ENCODE measurements at regions of chr9 and their contacts with region 1.

Region 1: DNA sequence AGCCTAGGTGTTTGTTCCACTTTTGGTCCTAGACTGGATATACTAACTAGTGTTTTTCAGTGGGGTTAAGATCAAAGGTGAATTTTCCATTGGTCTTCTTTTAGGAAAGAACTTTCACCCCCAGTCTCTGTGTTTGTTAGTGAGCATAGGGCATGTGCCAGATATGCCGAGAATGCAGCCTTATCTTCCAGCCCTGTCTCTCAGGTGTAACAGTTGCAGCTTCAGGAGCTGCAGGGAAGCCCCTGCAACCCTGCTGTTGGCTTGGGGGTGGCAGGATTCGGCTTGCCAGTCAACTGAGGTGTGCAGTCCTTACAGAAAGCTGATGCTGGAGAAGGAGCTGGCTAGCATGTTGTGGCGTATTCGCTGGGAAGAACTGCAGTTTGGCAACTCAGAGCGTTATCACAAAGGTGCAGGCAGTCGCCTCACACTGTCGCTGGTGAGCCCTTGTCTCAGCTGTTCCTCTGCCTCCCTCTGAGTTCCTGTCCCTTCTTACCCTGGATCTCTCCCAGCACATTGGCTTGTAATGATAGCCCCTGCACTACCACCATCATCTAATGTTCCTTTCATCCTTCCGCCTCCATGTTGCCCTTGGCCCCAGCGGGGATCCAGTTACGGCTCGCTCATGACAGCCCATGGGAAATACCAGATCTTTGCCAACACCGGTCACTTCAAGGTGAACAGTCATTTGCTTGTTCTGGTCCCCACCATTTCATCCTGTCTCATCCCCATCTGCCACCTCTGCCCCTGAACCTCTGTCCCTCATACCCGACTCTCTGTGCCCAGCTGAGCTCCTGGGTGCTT is 10.1 kb downstream of the NPR2 start:
- DNase-seq: peak; percentile 55 to 62
- H3K4me3 ChIP-seq: peak overlapping the region; percentile 6; the same call in 1 of the 2 replicates
- H3K4me3 Mint-ChIP-seq: peak overlapping the region; percentile 70
- H3K27ac Mint-ChIP-seq: peak overlapping the region; percentile 85
- H3K4me1 ChIP-seq: peaks cover 46% of the 10 kb centered on the region
- H3K4me1 Mint-ChIP-seq: peaks cover 29% of the 10 kb centered on the region
- H3K27me3 ChIP-seq: no peaks in the 10 kb centered on the region
- H3K27me3 Mint-ChIP-seq: no peaks in the 10 kb centered on the region
- CTCF ChIP-seq: no peak

Region 2: GRCh38 chr9:35603987-35604577 is 197.4 kb before region 1 on chr9:
- CTCF ChIA-PET with region 1: no interaction called
- POLR2A ChIA-PET with region 1: no interaction called
- intact Hi-C with region 1: no loop called
- DNase-seq: peak; percentile 99 to 100
- H3K4me3 ChIP-seq: peak overlapping the region; percentile 92
- H3K4me3 Mint-ChIP-seq: peak overlapping the region; percentile 99
- H3K27ac Mint-ChIP-seq: peak overlapping the region; percentile 99
- H3K4me1 ChIP-seq: peaks cover 16% of the 10 kb centered on the region
- H3K4me1 Mint-ChIP-seq: peaks cover 23% of the 10 kb centered on the region
- H3K27me3 ChIP-seq: no peaks in the 10 kb centered on the region
- H3K27me3 Mint-ChIP-seq: no peaks in the 10 kb centered on the region
- CTCF ChIP-seq: peak; percentile 78 to 83

Region 3: GRCh38 chr9:35732122-35732799 is 69.3 kb before region 1 on chr9 and contains the starts of genes CREB3 and TLN1:
- CTCF ChIA-PET with region 1: no interaction called
- POLR2A ChIA-PET with region 1: no interaction called
- intact Hi-C with region 1: no loop called
- DNase-seq: peak; percentile 98 to 99
- H3K4me3 ChIP-seq: peak within 1 kb of the TSS; percentile 83
- H3K4me3 Mint-ChIP-seq: no peak within 1 kb of the TSS
- H3K27ac Mint-ChIP-seq: no peak within 1 kb of the TSS
- H3K4me1 ChIP-seq: peaks cover 39% of the 10 kb centered on the region
- H3K4me1 Mint-ChIP-seq: no peaks in the 10 kb centered on the region
- H3K27me3 ChIP-seq: no peaks in the 10 kb centered on the region
- H3K27me3 Mint-ChIP-seq: no peaks in the 10 kb centered on the region
- CTCF ChIP-seq: peak in 1 of 2 experiments; percentile 12
- total RNA-seq, gene CREB3: 50.4 and 54.1 TPM in 2 replicates
- total RNA-seq, gene TLN1: 147 and 165 TPM in 2 replicates

Region 4: DNA sequence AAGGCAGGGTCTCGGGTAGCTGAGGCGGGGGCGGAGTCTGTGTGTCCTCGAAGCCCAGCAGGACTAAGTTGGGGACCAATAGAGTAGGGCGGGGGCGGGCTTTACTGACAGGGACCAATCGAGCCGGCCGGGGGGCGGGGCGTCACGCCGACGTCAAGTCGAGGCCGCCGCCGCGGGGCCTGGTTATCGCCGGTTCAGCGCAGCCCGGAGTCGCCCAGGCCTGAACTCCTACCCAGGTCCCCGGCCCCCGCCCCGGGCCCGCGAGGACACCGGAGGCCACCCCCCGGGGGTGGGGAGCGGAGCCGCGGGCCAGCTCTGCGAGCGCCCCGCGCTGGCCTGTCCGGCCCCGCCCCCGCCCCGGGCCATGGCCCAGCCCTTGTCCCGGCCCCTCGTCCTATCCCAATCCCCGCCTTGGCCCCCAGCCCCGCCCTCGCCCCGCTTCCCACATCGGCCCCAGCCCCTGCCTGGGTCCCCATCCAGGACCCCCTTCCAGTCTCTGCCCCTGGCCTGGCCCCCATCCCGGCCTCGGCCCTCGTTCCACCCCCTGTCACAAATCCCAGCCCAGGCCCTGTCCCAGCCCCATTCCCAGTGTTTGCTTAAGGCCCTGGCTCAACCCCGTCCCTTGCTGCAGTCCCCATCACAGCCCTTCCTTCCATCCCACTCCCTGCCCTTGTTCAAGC is 27.7 kb after region 1 on chr9 and contains the start of gene TMEM8B:
- CTCF ChIA-PET with region 1: interaction called, 6 read pairs
- POLR2A ChIA-PET with region 1: no interaction called
- intact Hi-C with region 1: loop called (anchors 1 kb)
- DNase-seq: peak; percentile 94 to 95
- H3K4me3 ChIP-seq: peak within 1 kb of the TSS; percentile 48
- H3K4me3 Mint-ChIP-seq: peak within 1 kb of the TSS; percentile 88
- H3K27ac Mint-ChIP-seq: peak within 1 kb of the TSS; percentile 88
- H3K4me1 ChIP-seq: peaks cover 4% of the 10 kb centered on the region; the same call in 1 of the 2 replicates
- H3K4me1 Mint-ChIP-seq: peaks cover 8% of the 10 kb centered on the region
- H3K27me3 ChIP-seq: no peaks in the 10 kb centered on the region
- H3K27me3 Mint-ChIP-seq: no peaks in the 10 kb centered on the region
- CTCF ChIP-seq: no peak
- total RNA-seq, gene TMEM8B: 4.8 and 4.9 TPM in 2 replicates

Measured in Caco-2 (cell line).